ENCODE measurements at regions of chr17 and their contacts with region 1.

Region 1: DNA sequence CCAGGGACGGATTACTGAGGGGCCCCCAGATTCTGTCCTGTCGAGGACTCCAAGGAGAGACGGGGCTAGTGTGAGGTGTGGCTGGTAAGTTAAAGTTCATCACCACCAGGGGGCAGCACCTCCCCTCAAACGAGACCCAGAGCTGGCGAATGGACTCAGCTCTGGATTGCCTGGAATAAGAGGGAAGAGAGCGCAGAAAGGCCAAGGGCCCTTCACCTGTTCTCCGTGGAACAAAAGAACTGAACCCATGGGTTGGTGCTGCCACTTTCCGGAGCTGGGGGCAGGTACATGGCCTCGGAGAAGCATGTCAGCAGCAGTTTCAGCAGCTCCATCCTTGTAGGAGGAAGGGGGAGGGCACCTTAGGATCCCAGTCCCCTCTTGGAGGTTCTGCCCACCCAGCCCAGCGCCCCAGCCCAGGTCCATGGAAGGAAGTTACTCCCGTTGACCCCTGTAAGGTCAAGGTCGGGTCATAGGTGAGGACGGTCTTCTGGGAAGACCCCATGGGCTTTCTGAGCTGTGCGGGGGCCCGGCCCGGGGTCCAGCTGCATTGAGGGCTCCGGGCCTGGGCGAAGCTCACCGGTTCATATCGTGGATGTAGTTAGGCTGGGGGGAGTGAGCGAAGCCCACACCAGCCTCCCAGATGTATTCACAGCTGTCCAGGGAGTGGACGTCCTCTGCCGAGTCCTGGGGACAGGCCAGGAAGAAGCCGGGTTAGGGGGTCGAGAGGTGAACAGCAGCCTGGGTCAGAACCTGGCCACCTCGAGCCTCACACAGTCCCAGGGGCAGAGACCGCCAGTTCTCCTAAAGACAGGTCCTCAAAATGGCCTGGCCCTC is 10.7 kb downstream of the HID1 start:
- DNase-seq: peak; percentile 87
- CTCF ChIP-seq: peak; percentile 74

Region 2: GRCh38 chr17:74748529-74749365 is 213.1 kb before region 1 on chr17 and contains the start of gene NHERF1:
- CTCF ChIA-PET with region 1: interaction called, 13 read pairs
- POLR2A ChIA-PET with region 1: no interaction called
- DNase-seq: peak; percentile 99
- CTCF ChIP-seq: peak; percentile 19

Region 3: DNA sequence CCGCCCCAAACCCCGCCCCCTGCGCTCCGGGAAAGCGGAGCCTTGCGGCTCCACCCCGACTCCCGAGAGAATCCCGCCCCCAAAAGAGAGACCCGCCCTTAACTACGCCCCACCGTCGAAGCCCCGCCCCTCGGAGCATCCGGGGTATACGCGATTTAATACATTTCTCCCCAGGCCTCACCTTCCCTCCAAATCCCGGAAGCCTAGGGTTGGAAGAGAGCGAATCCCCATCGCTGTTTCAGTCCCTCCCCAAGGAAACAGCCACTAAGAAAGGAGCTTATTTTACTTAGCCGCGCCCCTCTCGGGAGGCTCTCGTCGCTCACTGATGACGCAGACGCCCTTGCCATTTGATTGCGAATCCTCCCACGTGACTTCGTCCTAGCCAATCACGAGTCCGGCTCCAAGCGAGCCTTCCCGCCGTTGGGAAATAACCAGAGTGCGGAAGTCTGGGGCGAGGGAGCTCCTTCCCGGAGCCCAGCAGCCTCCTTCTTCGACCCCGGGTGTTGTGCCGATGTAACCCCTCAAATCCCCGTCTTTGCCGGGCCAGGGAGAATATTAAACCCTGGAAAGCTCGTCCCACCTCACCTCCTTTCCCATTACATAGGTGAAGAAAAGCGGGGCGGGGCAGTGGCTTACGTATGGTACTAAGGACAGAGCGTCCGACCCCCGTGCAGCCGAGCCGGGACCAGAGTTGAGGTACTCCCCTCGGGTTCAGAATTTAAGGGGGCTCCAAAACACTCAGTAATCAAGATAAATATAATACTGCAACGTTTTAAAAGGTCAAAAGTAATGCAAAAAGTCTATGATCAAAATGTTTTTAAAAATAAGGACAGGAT is 88.6 kb before region 1 on chr17:
- CTCF ChIA-PET with region 1: interaction called, 14 read pairs
- POLR2A ChIA-PET with region 1: no interaction called
- DNase-seq: peak; percentile 100
- CTCF ChIP-seq: no peak

Region 4: DNA sequence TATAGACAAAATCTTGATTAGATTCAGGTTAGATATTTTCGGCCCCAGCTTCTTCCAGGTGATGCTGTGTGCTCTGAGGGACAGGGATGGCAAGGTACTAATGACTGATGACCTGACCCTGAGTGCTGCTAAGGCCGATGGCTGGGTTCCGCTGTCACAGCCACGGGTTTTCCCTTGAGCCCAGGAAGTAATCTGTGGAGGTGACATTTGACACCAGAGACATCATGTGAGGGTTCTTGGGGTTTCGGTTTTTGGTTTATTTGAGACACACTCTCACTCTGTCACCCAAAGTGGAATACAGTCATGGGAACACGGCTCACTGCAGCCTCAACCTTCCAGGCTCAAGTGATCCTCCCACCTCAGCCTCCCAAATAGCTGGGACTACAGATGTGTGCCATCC is 16.3 kb before region 1 on chr17:
- CTCF ChIA-PET with region 1: interaction called, 156 read pairs
- POLR2A ChIA-PET with region 1: no interaction called
- DNase-seq: peak; percentile 76
- CTCF ChIP-seq: no peak

Region 5: GRCh38 chr17:74998783-74999182 is 36.9 kb after region 1 on chr17:
- CTCF ChIA-PET with region 1: interaction called, 138 read pairs
- POLR2A ChIA-PET with region 1: no interaction called
- DNase-seq: no peak
- CTCF ChIP-seq: no peak

Region 6: GRCh38 chr17:75109407-75110233 is 147.7 kb after region 1 on chr17 and contains the start of gene ARMC7:
- CTCF ChIA-PET with region 1: interaction called, 35 read pairs
- POLR2A ChIA-PET with region 1: no interaction called
- DNase-seq: peak; percentile 97
- CTCF ChIP-seq: no peak

Region 7: GRCh38 chr17:75205037-75205792 is 243.3 kb after region 1 on chr17 and contains the start of gene NUP85:
- CTCF ChIA-PET with region 1: interaction called, 114 read pairs
- POLR2A ChIA-PET with region 1: no interaction called
- DNase-seq: peak; percentile 99
- CTCF ChIP-seq: no peak

Region 8: DNA sequence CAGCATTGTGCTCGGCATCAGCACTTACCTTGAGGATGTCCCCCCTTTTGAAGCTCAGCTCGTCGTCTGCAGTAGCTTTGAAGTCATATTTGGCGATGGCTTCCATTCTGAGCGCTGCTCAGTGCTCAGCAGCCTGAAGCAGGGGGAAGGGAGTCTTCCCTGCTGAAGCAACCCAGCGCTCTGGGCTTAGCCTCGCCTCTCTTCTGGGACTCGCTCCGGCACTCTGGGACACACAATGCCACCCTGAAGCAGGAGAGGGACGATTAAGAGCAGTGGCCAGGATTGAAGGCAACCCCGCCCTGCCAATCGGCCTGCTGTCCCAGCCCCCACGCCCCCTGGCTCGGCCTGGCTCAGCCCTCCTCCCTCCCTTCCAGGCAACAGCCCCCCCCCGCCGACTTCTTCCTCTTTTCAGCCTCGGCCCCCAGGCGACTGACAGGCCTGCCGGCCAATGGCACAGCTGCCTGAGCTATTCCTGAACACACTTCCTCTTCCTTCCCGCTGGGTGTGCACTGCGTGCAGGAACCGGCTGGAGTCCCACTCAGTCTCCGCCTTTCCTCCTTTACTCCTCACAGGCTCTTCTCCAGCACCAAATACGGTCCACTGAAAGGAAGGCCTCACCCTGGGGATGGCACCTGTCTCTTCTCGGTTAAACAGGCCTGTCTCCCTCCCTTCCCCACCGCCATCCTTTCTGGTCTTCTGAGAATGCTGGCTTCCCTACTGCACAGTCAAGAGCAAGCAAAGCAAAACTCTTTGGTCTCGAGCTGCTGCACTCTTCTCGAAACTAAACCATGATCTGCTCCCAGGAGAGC is 431.9 kb after region 1 on chr17:
- CTCF ChIA-PET with region 1: no interaction called
- POLR2A ChIA-PET with region 1: no interaction called
- DNase-seq: peak; percentile 91
- CTCF ChIP-seq: no peak